Esophagus squamous epithelium (tissue), 5 donors: ENCODE measurements at regions of chr4 and their contacts with region 1.

Region 1: DNA sequence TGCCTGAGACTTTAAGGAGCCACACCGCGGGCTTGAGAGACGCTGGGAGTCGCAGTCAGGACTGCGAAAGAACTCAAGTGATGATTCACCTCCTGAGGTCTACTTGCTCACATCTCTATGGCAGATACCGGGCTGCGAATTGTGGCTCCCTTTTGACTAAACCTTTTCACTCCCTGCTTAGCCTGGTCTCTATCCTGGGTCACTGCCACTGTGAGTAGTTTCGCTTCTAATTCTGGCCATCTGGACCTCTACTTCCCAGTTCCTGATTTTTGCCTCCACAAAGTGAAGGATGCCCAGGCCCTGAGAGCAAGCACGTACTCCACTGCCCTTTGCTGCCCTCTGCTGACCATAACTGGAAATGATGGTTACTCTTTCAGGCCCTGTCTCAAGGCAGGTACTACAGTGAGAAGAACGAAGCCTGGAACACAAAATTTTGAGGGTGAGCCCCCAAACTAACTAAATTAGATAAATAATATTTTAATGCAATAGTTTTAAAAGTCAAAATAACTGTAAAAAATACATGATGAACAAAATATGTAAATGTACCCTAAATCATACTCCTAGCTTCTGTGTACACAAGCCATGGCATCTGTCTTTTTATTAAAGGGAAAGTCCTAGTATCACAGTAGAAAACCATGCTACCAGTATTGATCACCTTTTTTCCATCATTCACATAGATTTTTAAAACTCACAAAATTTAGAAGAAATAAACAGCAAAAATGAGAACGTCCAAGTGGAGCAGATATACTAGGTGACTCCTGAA is 16.7 kb downstream of the MAD2L1 start:
- DNase-seq: peak; percentile 6
- H3K4me3 ChIP-seq: peak overlapping the region in 3 of 4 donors; percentile 16 to 42 (median 19)
- H3K27ac ChIP-seq: peak overlapping the region in 3 of 4 donors; percentile 38 to 73 (median 72)
- H3K4me1 ChIP-seq: peaks cover 0 to 11% (median 0%) of the 10 kb centered on the region in 3 donors
- H3K27me3 ChIP-seq: no peaks in the 10 kb centered on the region
- CTCF ChIP-seq: peak; percentile 72 to 83 (median 78)
- POLR2A ChIP-seq: no peak

Region 2: GRCh38 chr4:119314356-119314755 is 735.6 kb before region 1 on chr4:
- intact Hi-C with region 1: loop called (anchors 10 kb)
- DNase-seq: no peak
- H3K4me3 ChIP-seq: no peak overlapping the region
- H3K27ac ChIP-seq: no peak overlapping the region
- H3K4me1 ChIP-seq: no peaks in the 10 kb centered on the region
- H3K27me3 ChIP-seq: no peaks in the 10 kb centered on the region
- CTCF ChIP-seq: peak in 5 of 6 experiments; percentile 29 to 65 (median 36)
- POLR2A ChIP-seq: no peak

Region 3: DNA sequence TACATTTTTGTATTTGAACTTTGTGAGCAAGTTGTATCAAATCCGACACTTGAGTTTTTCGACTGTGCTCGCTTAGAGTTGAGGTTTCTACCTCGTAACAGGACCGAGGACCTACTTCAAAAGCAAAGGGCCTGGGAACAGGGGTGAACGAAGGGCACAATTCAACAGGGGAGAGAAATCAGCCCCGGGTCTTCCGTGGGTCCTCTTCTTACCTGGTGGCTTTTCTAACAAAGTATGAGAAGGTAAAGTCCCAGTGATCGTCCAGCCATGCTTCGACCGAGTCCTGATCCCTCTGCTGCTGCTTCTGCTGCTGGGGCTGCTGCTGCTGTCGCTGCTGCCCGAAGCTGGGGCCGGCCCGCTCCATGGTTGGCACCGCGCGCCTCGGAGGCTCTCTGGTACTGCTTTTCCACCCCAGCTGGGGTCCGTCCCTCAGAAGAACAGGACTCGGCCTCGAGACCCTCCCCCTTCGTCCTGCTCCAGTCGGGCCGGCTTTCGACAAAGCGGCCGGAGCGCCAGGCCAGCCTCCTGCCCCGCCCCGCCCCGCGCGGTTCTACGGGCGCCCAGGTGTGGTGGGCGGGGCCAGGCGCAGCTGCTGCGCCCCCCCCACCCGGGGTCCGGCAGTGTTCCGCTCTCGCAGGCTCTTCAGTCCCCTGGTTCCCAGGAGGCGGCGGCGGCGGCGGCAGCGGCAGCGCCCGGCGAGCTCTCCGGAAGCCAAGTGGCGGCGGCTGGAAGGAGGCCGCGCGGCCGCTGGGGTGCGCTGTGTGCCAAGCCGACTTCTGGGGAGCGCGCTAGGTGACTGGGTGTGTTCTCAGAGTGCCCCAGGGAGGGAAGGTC is 421.4 kb before region 1 on chr4 and contains the start of gene PDE5A:
- intact Hi-C with region 1: loop called (anchors 5 kb)
- DNase-seq: peak; percentile 8
- H3K4me3 ChIP-seq: peak within 1 kb of the TSS; percentile 52 to 84 (median 82)
- H3K27ac ChIP-seq: peak within 1 kb of the TSS; percentile 67 to 95 (median 91)
- H3K4me1 ChIP-seq: peaks cover 0 to 26% (median 4%) of the 10 kb centered on the region in 3 donors
- H3K27me3 ChIP-seq: peaks cover 0 to 4% (median 0%) of the 10 kb centered on the region in 4 donors
- CTCF ChIP-seq: peak; percentile 48 to 87 (median 78)
- POLR2A ChIP-seq: peak in 1 of 4 donors; percentile 31
- total RNA-seq, gene PDE5A: 1.9 to 26.7 (median 6.0) TPM